Esophagus muscularis mucosa (tissue), 4 donors: ENCODE measurements at regions of chr4 and their contacts with region 1.

Region 1: DNA sequence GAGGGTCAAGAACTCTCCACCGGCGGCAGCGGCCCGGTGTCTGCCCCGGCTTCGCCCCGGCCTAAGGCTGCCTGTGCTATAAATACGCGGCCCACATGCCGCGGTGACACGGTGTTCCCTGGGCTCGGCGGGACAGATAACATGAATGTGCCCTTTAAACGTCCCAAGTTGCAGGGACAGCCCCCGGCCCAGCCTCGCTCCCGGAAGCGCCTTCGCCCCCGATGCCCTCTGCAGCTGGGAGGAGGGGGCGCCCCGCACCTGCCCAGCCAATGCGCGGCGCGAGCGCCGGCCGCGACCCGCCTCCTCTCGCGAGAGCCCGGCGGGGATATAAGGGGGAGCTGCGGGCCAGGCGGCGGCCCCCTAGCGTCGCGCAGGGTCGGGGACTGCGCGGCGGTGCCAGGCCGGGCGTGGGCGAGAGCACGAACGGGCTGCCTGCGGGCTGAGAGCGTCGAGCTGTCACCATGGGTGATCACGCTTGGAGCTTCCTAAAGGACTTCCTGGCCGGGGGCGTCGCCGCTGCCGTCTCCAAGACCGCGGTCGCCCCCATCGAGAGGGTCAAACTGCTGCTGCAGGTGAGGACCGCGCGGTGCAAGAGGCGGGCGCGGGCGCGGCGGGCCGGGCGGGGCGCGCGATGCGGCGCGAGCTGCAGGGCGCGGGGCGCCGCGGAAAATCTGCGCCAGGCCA is at the start of gene SLC25A4:
- DNase-seq: no peak
- H3K4me3 ChIP-seq: peak within 1 kb of the TSS; percentile 71 to 90 (median 76)
- H3K27ac ChIP-seq: peak within 1 kb of the TSS; percentile 93 to 96 (median 96)
- H3K4me1 ChIP-seq: peaks cover 10 to 45% (median 43%) of the 10 kb centered on the region in 4 donors
- H3K27me3 ChIP-seq: no peaks in the 10 kb centered on the region
- CTCF ChIP-seq: peak; percentile 39 to 59 (median 44)
- EP300 ChIP-seq: no peak
- POLR2A ChIP-seq: peak; percentile 93
- total RNA-seq, gene SLC25A4: 135 to 158 (median 140) TPM

Region 2: DNA sequence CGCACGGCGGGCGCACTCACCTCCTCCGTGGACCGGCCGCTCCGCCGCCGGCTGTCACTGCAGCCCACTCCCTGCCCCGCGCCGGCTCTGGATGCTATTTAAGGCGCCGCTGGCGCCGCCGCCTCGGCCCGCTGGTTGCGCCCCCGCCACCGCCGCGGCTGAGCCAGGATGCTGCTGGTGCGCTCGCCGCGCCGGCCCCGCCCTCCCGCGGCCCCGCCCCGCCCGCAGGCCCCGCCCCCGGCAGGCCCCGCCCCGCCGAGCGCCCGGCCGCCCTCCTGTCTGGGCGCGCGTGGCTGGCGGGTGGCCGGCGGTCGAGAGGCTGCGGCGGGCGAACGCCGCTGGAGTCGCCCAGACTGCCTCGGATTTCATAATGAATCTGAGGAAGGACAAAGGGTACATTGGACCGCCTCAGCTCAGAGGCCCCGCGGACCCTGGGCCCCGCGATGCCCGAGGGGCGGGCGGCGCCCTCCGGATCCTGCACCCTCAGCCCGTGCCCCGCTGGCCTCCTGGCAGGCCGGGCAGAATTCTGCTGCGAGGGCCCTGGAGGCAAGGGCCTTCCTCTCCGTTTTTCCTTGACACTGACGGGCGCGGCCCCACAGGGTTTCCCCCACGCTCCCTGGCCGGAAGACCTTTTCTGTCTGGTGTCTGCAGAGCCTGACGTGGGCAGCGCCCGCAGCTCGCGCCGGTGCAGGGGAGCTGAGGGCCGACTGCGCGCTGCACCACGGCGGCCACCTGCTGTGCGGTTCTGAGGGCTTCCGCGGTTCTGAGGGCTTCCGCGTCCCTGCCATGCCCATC is 317.0 kb before region 1 on chr4 and contains the start of gene ACSL1:
- intact Hi-C with region 1: loop called (anchors 10 kb)
- DNase-seq: no peak
- H3K4me3 ChIP-seq: peak within 1 kb of the TSS; percentile 74 to 91 (median 84)
- H3K27ac ChIP-seq: peak within 1 kb of the TSS; percentile 78 to 93 (median 88)
- H3K4me1 ChIP-seq: peaks cover 22 to 29% (median 27%) of the 10 kb centered on the region in 4 donors
- H3K27me3 ChIP-seq: no peaks in the 10 kb centered on the region
- CTCF ChIP-seq: peak in 2 of 3 experiments; percentile 19
- EP300 ChIP-seq: no peak
- POLR2A ChIP-seq: peak; percentile 22
- total RNA-seq, gene ACSL1: 43.5 to 136 (median 52.0) TPM

Region 3: DNA sequence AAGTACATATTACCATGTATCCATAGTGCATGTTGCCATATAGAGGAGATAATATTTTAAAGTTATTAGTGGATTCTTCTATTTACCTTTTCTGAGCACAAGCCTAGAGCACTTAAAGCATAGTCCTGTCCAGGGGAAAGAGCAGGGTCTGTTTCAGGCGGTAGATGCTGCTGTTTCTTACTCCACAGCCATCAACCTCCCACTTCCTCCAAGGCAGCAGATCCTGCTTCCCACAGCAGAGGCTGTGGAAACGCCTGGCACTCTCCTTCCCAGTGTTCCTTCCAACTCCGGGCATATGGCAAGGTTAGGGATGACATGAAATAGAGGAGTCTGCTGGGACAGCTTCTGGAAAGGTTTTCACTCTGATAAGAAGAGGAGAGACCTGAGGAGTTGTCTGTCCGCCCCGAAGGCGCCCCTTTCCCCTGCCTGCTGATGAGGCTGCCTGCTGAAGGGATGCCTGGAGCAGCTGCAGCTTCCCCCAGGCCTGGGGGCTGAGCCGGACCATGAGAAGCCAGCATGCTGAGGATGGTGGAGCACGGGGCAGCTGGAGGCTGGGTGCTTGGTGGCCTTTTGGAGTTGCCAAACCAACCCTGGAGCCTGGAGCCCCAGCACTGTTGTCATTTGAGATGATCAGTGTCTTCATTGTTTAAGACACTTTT is 43.9 kb before region 1 on chr4:
- intact Hi-C with region 1: no loop called
- DNase-seq: no peak
- H3K4me3 ChIP-seq: no peak overlapping the region
- H3K27ac ChIP-seq: no peak overlapping the region
- H3K4me1 ChIP-seq: no peaks in the 10 kb centered on the region
- H3K27me3 ChIP-seq: peaks cover 0 to 4% (median 0%) of the 10 kb centered on the region in 4 donors
- CTCF ChIP-seq: no peak
- EP300 ChIP-seq: no peak
- POLR2A ChIP-seq: no peak

Region 4: DNA sequence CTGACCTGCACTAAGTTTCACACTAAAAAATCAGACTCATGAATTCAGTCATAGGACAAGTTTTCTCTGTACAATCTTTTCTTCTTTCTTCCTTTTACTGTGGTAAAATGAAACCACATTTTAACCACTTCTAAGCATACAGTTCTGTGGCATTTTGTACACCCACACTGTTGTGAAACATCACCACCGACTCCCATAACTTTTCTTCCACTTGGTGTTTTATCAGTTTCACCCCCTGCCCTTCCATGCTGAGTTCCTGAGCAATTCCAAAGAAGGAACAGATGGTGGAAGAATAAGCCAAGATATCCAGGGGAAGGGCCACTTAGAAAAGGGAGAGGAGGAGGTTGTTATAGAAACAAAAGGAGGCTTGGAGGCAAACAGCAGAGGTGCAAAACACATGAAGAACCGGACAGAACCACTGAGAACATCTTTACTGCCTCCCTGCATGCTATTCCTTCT is 22.6 kb after region 1 on chr4:
- intact Hi-C with region 1: no loop called
- DNase-seq: no peak
- H3K4me3 ChIP-seq: no peak overlapping the region
- H3K27ac ChIP-seq: no peak overlapping the region
- H3K4me1 ChIP-seq: no peaks in the 10 kb centered on the region
- H3K27me3 ChIP-seq: no peaks in the 10 kb centered on the region
- CTCF ChIP-seq: no peak
- EP300 ChIP-seq: no peak
- POLR2A ChIP-seq: no peak

Region 5: DNA sequence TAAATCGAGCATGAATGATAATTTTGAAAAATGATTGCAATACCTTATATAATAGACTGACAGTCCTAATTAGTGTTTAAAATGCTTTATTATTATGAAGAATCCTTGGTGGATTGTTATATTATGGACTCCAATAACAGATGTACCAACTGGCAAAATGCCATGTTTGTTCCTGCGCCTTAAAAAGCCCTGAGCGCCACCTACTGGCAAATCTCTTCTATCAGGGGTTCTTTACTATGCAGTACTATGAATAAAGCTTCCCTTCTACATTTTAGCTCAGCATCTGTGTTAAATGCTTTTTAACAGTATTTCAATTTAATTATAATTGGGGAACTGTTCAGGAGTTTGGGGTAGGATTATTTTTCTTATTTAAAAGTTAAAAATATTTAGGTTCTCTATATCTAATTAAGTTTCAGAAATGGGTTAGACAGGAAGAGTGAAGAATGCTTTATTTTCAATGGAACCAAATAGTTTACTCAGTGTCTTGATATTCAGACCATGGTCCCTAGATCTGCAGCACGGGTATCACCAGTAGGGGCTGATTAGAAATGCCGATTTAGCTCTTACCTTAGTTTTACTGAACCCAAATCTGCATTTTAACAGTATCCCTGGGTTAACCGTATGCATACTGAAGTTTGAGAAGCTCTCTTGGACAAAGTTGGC is 40.7 kb after region 1 on chr4:
- intact Hi-C with region 1: loop called (anchors 5 kb)
- DNase-seq: no peak
- H3K4me3 ChIP-seq: no peak overlapping the region
- H3K27ac ChIP-seq: peak overlapping the region in 1 of 4 donors; percentile 16
- H3K4me1 ChIP-seq: peaks cover 0 to 34% (median 17%) of the 10 kb centered on the region in 4 donors
- H3K27me3 ChIP-seq: no peaks in the 10 kb centered on the region
- CTCF ChIP-seq: peak; percentile 77 to 89 (median 79)
- EP300 ChIP-seq: no peak
- POLR2A ChIP-seq: no peak